GM18951 (cell line): ENCODE measurements at regions of chr1 and their contacts with region 1.

Region 1: DNA sequence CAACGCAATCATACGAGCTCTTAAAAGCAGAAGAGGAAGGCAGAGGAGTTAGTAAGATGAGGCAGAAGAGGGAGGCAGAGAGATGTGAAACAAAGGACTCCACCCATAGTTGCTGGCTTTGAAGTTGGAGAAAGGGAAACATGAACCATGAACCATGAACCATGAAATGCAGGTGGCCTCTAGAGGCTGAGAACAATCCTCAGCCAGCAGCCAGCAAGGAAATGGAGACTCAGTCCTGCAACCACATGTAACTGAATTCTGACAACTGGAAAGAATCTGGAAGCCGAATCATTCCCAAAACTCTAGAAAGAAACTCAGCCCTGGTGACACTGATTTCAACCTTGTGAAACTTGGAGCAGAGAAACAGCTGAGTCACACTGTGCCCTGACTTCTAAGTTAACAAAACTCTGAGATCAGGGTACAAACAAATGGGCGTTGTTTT is 10.1 kb downstream of the DIPK1A start:
- POLR2A ChIP-seq: no peak

Region 2: DNA sequence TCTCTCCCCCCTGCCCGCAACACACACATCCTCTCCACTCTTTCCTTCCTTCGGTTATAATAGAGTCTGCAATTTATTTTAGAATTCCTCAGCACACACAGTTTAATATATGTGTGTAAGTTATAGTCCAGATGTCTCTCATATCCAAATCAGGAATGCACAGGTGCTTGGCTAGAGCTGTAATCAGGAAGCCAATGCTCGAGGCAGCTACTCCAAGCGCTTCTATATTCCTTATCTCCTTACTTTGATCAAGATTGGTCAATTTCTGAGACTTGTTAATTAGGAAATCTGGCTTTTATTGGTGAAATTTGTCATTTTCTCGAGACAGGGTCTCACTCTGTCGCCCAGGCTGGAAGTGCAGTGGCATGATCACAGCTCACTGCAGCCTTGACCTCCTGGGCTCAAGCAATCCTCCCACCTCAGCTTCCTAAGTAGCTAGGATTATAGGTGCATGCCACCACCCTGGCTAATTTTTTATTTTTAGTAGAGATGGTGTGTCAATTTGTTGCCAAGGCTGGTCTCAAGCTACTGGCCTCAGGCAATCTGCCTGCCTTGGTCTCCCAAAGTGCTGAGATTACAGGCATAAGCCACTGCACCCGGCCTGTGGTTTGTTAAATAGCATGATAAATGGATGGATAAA is 91.6 kb before region 1 on chr1:
- in situ Hi-C with region 1: loop called (anchors 10 kb)
- POLR2A ChIP-seq: no peak